Naive thymus-derived CD4-positive, alpha-beta T cell (primary cell): ENCODE measurements at regions of chr19 and their contacts with region 1.

Region 1: GRCh38 chr19:3062168-3063102 is at the start of gene TLE5:
- DNase-seq: peak; percentile 69 to 79 (median 76)
- ATAC-seq: peak; percentile 78
- H3K4me3 ChIP-seq: peak within 1 kb of the TSS; percentile 99
- H3K4me3 Mint-ChIP-seq: peak within 1 kb of the TSS; percentile 88 to 99 (median 94)
- H3K27ac ChIP-seq: peak within 1 kb of the TSS; percentile 90
- H3K27ac Mint-ChIP-seq: peak within 1 kb of the TSS; percentile 90 to 98 (median 95)
- H3K4me1 ChIP-seq: peaks cover 24 to 43% of the 10 kb centered on the region in 2 donors
- H3K4me1 Mint-ChIP-seq: peaks cover 13 to 45% (median 29%) of the 10 kb centered on the region in 7 donors
- H3K27me3 ChIP-seq: no peaks in the 10 kb centered on the region
- H3K27me3 Mint-ChIP-seq: peaks cover 0 to under 1% (median 0%) of the 10 kb centered on the region in 5 donors
- total RNA-seq, gene TLE5: 658 to 1,102 (median 755) TPM

Region 2: GRCh38 chr19:2900296-2901252 is 161.9 kb before region 1 on chr19 and contains the start of gene ZNF57:
- CTCF ChIA-PET with region 1: no interaction called
- POLR2A ChIA-PET with region 1: no interaction called
- intact Hi-C with region 1: loop called in 1 of 2 experiments (anchors 2 kb)
- DNase-seq: peak; percentile 83 to 98 (median 96)
- ATAC-seq: peak; percentile 99
- H3K4me3 ChIP-seq: peak within 1 kb of the TSS; percentile 79
- H3K4me3 Mint-ChIP-seq: peak within 1 kb of the TSS; percentile 88 to 99 (median 96)
- H3K27ac ChIP-seq: peak within 1 kb of the TSS; percentile 63
- H3K27ac Mint-ChIP-seq: peak within 1 kb of the TSS; percentile 55 to 91 (median 85)
- H3K4me1 ChIP-seq: peaks cover 0 to 4% of the 10 kb centered on the region in 2 donors
- H3K4me1 Mint-ChIP-seq: peaks cover 11 to 28% (median 21%) of the 10 kb centered on the region in 7 donors
- H3K27me3 ChIP-seq: no peaks in the 10 kb centered on the region
- H3K27me3 Mint-ChIP-seq: no peaks in the 10 kb centered on the region
- total RNA-seq, gene ZNF57: 1.7 to 5.0 (median 2.2) TPM

Region 3: GRCh38 chr19:3028305-3029064 is 34.0 kb before region 1 on chr19:
- CTCF ChIA-PET with region 1: no interaction called
- POLR2A ChIA-PET with region 1: interaction called, 11 read pairs
- intact Hi-C with region 1: no loop called
- DNase-seq: peak in 2 of 9 donors; percentile 17 to 48
- ATAC-seq: peak; percentile 37
- H3K4me3 ChIP-seq: peak overlapping the region; percentile 52
- H3K4me3 Mint-ChIP-seq: peak overlapping the region; percentile 54 to 93 (median 80)
- H3K27ac ChIP-seq: peak overlapping the region; percentile 64
- H3K27ac Mint-ChIP-seq: peak overlapping the region in 5 of 9 donors; percentile 10 to 86 (median 60)
- H3K4me1 ChIP-seq: peaks cover 12 to 25% of the 10 kb centered on the region in 2 donors
- H3K4me1 Mint-ChIP-seq: peaks cover 5 to 55% (median 41%) of the 10 kb centered on the region in 7 donors
- H3K27me3 ChIP-seq: no peaks in the 10 kb centered on the region
- H3K27me3 Mint-ChIP-seq: peaks cover 0 to 75% (median 0%) of the 10 kb centered on the region in 5 donors

Region 4: GRCh38 chr19:3047425-3048189 is 14.8 kb before region 1 on chr19:
- CTCF ChIA-PET with region 1: interaction called, 6 read pairs
- POLR2A ChIA-PET with region 1: interaction called, 359 read pairs
- intact Hi-C with region 1: loop called in 1 of 2 experiments (anchors 1 kb)
- DNase-seq: peak; percentile 46 to 85 (median 80)
- ATAC-seq: peak; percentile 93
- H3K4me3 ChIP-seq: peak overlapping the region; percentile 51
- H3K4me3 Mint-ChIP-seq: peak overlapping the region; percentile 87 to 100 (median 96)
- H3K27ac ChIP-seq: peak overlapping the region; percentile 66
- H3K27ac Mint-ChIP-seq: peak overlapping the region; percentile 41 to 99 (median 98)
- H3K4me1 ChIP-seq: peaks cover 4 to 7% of the 10 kb centered on the region in 2 donors
- H3K4me1 Mint-ChIP-seq: peaks cover 10 to 46% (median 35%) of the 10 kb centered on the region in 7 donors
- H3K27me3 ChIP-seq: no peaks in the 10 kb centered on the region
- H3K27me3 Mint-ChIP-seq: peaks cover 0 to 16% (median 0%) of the 10 kb centered on the region in 5 donors

Region 5: GRCh38 chr19:3094601-3095437 is 32.4 kb after region 1 on chr19:
- CTCF ChIA-PET with region 1: no interaction called
- POLR2A ChIA-PET with region 1: no interaction called
- intact Hi-C with region 1: loop called in 1 of 2 experiments (anchors 2 kb)
- DNase-seq: peak in 3 of 9 donors; percentile 27 to 45 (median 30)
- ATAC-seq: peak; percentile 10
- H3K4me3 ChIP-seq: peak overlapping the region; percentile 48
- H3K4me3 Mint-ChIP-seq: peak overlapping the region; percentile 59 to 93 (median 86)
- H3K27ac ChIP-seq: peak overlapping the region; percentile 52
- H3K27ac Mint-ChIP-seq: peak overlapping the region in 8 of 9 donors; percentile 37 to 91 (median 72)
- H3K4me1 ChIP-seq: peaks cover 20 to 36% of the 10 kb centered on the region in 2 donors
- H3K4me1 Mint-ChIP-seq: peaks cover 14 to 39% (median 28%) of the 10 kb centered on the region in 7 donors
- H3K27me3 ChIP-seq: peaks cover 0 to 5% of the 10 kb centered on the region in 2 donors
- H3K27me3 Mint-ChIP-seq: peaks cover 0 to 43% (median 5%) of the 10 kb centered on the region in 5 donors

Region 6: GRCh38 chr19:3185482-3186376 is 123.3 kb after region 1 on chr19 and contains the start of gene NCLN:
- CTCF ChIA-PET with region 1: no interaction called
- POLR2A ChIA-PET with region 1: interaction called, 3 read pairs
- intact Hi-C with region 1: loop called in 1 of 2 experiments (anchors 1 kb)
- DNase-seq: peak; percentile 92 to 98 (median 95)
- ATAC-seq: peak; percentile 94
- H3K4me3 ChIP-seq: peak within 1 kb of the TSS; percentile 71
- H3K4me3 Mint-ChIP-seq: peak within 1 kb of the TSS; percentile 86 to 99 (median 94)
- H3K27ac ChIP-seq: peak within 1 kb of the TSS; percentile 74
- H3K27ac Mint-ChIP-seq: peak within 1 kb of the TSS; percentile 89 to 99 (median 91)
- H3K4me1 ChIP-seq: peaks cover 53 to 63% of the 10 kb centered on the region in 2 donors
- H3K4me1 Mint-ChIP-seq: peaks cover 43 to 66% (median 54%) of the 10 kb centered on the region in 7 donors
- H3K27me3 ChIP-seq: no peaks in the 10 kb centered on the region
- H3K27me3 Mint-ChIP-seq: peaks cover 0 to 2% (median 0%) of the 10 kb centered on the region in 5 donors
- total RNA-seq, gene NCLN: 45.4 to 64.7 (median 53.7) TPM